GM18951 (cell line): ENCODE measurements at regions of chr3 and their contacts with region 1.

Region 1: GRCh38 chr3:146577662-146578061 is 27.5 kb downstream of the PLSCR5 start:
- POLR2A ChIP-seq: no peak

Region 2: GRCh38 chr3:146065573-146066006 is 512.1 kb before region 1 on chr3:
- in situ Hi-C with region 1: loop called (anchors 25 kb)
- POLR2A ChIP-seq: no peak

Region 3: GRCh38 chr3:146218880-146219866 is 358.5 kb before region 1 on chr3:
- in situ Hi-C with region 1: loop called (anchors 25 kb)
- POLR2A ChIP-seq: no peak